Dendritic cell treated with granulocyte-macrophage colony-stimulating factor and Interleukin-4, amounts not matched to agents 40 ng/mL and 50 ng/mL, for 4 days (primary cell): ENCODE measurements at regions of chr10 and their contacts with region 1.

Region 1: GRCh38 chr10:96271016-96271829 is at the start of gene BLNK:
- H3K4me3 Mint-ChIP-seq: peak within 1 kb of the TSS; percentile 78
- H3K27ac Mint-ChIP-seq: peak within 1 kb of the TSS; percentile 93
- H3K4me1 Mint-ChIP-seq: peaks cover 58% of the 10 kb centered on the region
- H3K27me3 Mint-ChIP-seq: no peaks in the 10 kb centered on the region

Region 2: DNA sequence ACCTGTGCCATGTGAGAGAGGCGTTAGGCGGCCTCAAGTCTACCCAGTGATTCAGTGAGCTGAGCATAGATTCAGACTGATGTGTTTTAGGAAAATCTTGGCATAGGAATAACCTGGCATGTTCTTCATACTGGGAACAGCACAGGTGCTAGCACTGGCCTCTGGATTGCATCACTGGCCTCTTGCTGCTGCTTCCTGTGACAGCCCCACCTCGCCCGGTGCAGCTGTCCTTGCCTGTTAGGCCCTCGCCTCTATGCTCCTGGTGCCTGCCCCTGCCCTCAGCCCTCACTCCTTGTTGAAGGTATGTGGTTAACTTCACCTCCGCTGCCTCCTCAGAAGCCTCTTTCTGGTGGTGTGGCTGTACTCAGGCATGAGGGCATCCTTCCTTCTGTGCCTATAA is 46.1 kb before region 1 on chr10:
- intact Hi-C with region 1: no loop called
- H3K4me3 Mint-ChIP-seq: no peak overlapping the region
- H3K27ac Mint-ChIP-seq: no peak overlapping the region
- H3K4me1 Mint-ChIP-seq: peaks cover 10% of the 10 kb centered on the region
- H3K27me3 Mint-ChIP-seq: no peaks in the 10 kb centered on the region

Region 3: DNA sequence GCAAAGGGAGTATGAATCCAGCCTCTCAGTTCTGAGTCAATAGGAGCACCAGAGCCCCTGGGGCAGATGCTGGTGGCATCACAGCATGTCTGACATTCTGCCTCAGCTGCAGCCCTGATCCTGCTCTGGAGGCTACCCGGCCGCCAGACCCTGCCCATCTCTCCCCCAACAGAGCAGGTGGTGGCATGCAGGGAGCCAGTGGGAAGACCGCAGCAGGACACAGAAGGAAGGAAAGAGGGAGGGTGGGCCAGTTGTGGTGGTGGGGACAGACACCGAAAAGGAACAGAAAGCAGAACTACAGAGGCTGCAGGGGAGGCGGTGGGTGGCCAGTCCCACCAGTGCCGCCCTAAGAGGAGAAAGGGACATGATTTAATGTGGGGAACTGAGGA is 35.1 kb before region 1 on chr10:
- intact Hi-C with region 1: loop called (anchors 5 kb)
- H3K4me3 Mint-ChIP-seq: peak overlapping the region; percentile 35
- H3K27ac Mint-ChIP-seq: peak overlapping the region; percentile 34
- H3K4me1 Mint-ChIP-seq: peaks cover 63% of the 10 kb centered on the region
- H3K27me3 Mint-ChIP-seq: no peaks in the 10 kb centered on the region

Region 4: DNA sequence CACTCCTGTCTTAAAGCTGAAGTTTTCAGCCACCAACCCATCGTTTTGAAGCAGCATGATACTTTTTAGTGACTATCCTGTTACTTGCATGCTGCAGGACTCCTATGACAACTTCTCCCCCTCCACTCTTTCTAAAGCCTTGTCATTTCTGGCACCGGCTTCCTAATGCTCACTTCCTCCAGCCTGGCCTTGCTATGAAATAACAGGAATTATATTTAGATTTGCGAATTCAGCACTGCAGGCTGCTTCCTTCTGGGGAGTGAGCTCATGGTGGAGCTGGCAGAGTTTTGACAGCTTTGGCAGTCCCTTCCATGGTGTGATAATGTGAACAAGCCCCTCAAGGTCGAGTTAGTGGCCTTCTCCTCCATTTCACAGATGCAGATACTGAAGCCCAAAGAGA is 13.3 kb before region 1 on chr10:
- intact Hi-C with region 1: loop called (anchors 1 kb)
- H3K4me3 Mint-ChIP-seq: peak overlapping the region; percentile 23
- H3K27ac Mint-ChIP-seq: peak overlapping the region; percentile 82
- H3K4me1 Mint-ChIP-seq: peaks cover 49% of the 10 kb centered on the region
- H3K27me3 Mint-ChIP-seq: no peaks in the 10 kb centered on the region